GM13977 (cell line): ENCODE measurements at regions of chr1 and their contacts with region 1.

Region 1: DNA sequence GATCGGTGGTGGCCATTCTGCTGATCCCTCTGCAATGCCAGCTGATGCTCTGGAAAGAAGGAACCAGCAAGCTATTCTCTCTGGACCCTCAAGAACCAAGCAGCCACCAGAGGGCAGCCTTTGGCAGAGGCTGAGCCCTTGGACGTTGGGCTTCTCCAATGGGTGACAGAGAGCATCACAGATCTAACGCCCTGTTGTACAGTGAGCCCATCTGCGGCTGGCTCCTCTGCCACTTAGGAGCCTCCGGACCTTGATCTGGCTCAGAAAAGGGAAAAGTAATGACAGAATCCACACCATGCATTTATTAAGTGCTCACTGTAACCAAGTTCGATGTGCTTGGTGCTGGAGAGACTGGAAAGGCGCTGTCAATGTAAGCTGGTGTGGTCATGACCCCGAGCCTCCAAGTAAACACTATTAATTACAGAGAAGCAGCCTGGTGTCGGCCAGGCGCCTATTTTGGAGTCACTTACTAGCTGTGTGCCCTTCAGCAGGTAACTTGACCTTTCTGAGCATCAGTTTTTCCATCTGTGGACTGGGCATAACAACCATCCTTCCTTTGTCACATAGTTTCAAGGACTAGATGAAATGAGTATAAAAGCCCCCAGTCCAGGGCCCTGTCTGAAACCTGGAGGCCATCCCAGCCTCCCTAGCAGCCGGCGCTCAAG is 34.9 kb downstream of the ECE1 start:
- DNase-seq: peak; percentile 80
- CTCF ChIP-seq: peak; percentile 86

Region 2: GRCh38 chr1:20511518-20512370 is 743.7 kb before region 1 on chr1:
- in situ Hi-C with region 1: no loop called
- DNase-seq: no peak
- CTCF ChIP-seq: no peak

Region 3: DNA sequence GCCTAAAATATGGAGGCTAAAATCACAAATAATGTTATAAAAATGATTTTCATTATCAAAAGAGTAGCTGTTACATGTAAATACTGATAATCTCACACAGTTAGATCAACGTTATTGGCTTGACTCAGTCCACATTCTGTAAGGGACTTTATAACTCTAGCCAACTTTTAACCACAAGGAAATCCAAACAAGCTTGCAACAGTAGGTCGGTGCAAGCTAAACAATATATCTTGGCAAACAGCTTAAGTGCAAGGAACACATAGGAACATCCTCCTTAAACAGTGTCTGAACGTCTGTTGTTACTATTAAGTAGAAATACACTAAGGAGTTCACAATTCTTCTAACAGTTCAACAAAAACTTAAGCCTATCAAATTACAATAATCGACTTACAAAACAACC is 205.4 kb before region 1 on chr1:
- in situ Hi-C with region 1: no loop called
- DNase-seq: no peak
- CTCF ChIP-seq: no peak

Region 4: DNA sequence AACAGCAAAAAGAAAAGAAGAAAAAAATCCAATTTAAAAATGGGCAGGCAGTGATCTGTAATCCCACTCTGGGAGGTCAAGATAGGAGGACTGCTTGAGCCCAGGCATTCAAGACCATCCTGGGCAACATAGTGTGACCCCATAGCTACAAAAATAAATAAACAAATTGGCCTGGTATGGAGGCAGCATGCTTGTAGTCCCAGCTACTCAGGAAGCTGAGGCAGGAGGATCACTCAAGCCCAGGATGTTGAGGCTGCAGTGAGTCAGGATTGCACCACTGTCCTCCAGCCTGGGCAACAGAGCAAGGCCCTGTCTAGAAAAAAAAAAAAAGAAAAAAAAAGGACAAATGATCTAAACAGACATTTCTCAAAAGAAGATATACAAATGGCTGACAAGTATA is 178.3 kb before region 1 on chr1:
- in situ Hi-C with region 1: no loop called
- DNase-seq: no peak
- CTCF ChIP-seq: no peak

Region 5: GRCh38 chr1:21090463-21090862 is 164.9 kb before region 1 on chr1:
- in situ Hi-C with region 1: no loop called
- DNase-seq: no peak
- CTCF ChIP-seq: no peak

Region 6: GRCh38 chr1:21368515-21369289 is 113.3 kb after region 1 on chr1:
- in situ Hi-C with region 1: loop called (anchors 10 kb)
- DNase-seq: peak; percentile 53
- CTCF ChIP-seq: peak; percentile 97